ENCODE measurements at regions of chr3 and their contacts with region 1.

Region 1: GRCh38 chr3:184513276-184514170 is 48.1 kb upstream of the EPHB3 start:
- DNase-seq: peak; percentile 74
- H3K4me3 Mint-ChIP-seq: peak overlapping the region; percentile 53
- H3K27ac Mint-ChIP-seq: no peak overlapping the region
- H3K4me1 Mint-ChIP-seq: no peaks in the 10 kb centered on the region
- H3K27me3 Mint-ChIP-seq: peaks cover 69% of the 10 kb centered on the region
- CTCF ChIP-seq: peak; percentile 80

Region 2: GRCh38 chr3:184417619-184418327 is 95.8 kb before region 1 on chr3:
- CTCF ChIA-PET with region 1: interaction called, 69 read pairs
- POLR2A ChIA-PET with region 1: interaction called, 3 read pairs
- intact Hi-C with region 1: loop called (anchors 1 kb)
- DNase-seq: peak; percentile 72
- H3K4me3 Mint-ChIP-seq: no peak overlapping the region
- H3K27ac Mint-ChIP-seq: no peak overlapping the region
- H3K4me1 Mint-ChIP-seq: no peaks in the 10 kb centered on the region
- H3K27me3 Mint-ChIP-seq: peaks cover 2% of the 10 kb centered on the region
- CTCF ChIP-seq: peak; percentile 91

Region 3: DNA sequence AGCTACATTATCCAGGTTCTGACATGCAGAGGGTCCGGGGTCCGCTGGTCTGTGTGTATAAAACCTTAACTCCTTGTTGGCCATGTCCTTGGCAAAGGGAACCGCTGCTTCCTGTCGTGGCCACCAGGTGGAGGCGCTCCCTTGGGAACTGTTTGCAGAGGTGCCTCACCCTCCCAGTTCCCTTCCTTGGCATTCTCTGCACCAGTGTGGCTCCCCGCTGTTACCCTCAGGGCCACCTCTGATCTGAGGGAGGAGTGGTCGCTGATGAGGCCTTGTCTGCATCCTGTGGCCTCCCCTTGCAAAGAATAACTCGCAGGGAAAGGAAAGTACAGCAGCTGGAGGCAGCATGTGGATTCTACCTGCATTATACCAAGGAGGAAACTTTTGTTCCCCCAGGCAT is 44.1 kb before region 1 on chr3:
- CTCF ChIA-PET with region 1: interaction called, 107 read pairs
- POLR2A ChIA-PET with region 1: interaction called, 4 read pairs
- intact Hi-C with region 1: loop called (anchors 1 kb)
- DNase-seq: peak; percentile 68
- H3K4me3 Mint-ChIP-seq: no peak overlapping the region
- H3K27ac Mint-ChIP-seq: no peak overlapping the region
- H3K4me1 Mint-ChIP-seq: no peaks in the 10 kb centered on the region
- H3K27me3 Mint-ChIP-seq: peaks cover 44% of the 10 kb centered on the region
- CTCF ChIP-seq: peak; percentile 78

Region 4: DNA sequence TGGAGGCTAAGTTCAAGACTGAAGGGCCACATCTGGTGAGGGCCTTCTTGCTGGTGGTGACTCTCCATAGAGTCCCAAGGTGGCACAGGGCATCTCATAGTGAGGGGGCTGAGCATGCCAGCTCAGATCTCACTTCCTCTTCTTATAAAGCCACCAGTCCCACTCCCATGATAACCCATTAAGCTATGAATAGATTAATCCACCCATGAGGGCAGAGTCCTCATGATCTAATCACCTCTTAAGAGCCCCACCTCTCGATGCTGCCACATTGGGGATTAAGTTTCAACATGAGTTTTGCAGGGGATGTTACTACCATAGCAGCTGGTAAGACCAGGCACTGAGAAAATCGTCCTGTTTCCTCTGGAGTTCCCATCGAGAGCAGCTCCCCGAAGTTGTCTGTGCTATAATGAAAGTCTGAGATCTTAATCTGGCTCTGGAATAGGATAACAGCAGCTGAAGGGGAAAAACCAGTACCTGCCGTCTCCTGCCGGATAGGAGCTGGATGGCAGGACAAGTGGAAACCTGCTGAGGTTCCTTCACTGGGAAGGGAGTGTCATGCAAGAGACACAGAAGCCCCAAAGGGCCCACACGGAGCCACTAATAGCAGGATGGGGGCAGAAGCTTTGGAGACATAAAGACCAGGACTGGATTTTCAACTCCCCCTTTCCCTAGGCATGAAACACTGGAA is 31.4 kb before region 1 on chr3:
- CTCF ChIA-PET with region 1: interaction called, 46 read pairs
- POLR2A ChIA-PET with region 1: no interaction called
- intact Hi-C with region 1: no loop called
- DNase-seq: no peak
- H3K4me3 Mint-ChIP-seq: no peak overlapping the region
- H3K27ac Mint-ChIP-seq: no peak overlapping the region
- H3K4me1 Mint-ChIP-seq: no peaks in the 10 kb centered on the region
- H3K27me3 Mint-ChIP-seq: peaks cover 28% of the 10 kb centered on the region
- CTCF ChIP-seq: no peak

Region 5: GRCh38 chr3:184523825-184524615 is 10.5 kb after region 1 on chr3:
- CTCF ChIA-PET with region 1: interaction called, 16 read pairs
- POLR2A ChIA-PET with region 1: no interaction called
- intact Hi-C with region 1: no loop called
- DNase-seq: peak; percentile 69
- H3K4me3 Mint-ChIP-seq: no peak overlapping the region
- H3K27ac Mint-ChIP-seq: no peak overlapping the region
- H3K4me1 Mint-ChIP-seq: peaks cover 14% of the 10 kb centered on the region
- H3K27me3 Mint-ChIP-seq: peaks cover 13% of the 10 kb centered on the region
- CTCF ChIP-seq: no peak

Region 6: GRCh38 chr3:184538600-184539431 is 25.3 kb after region 1 on chr3:
- CTCF ChIA-PET with region 1: interaction called, 42 read pairs
- POLR2A ChIA-PET with region 1: interaction called, 3 read pairs
- intact Hi-C with region 1: no loop called
- DNase-seq: no peak
- H3K4me3 Mint-ChIP-seq: no peak overlapping the region
- H3K27ac Mint-ChIP-seq: no peak overlapping the region
- H3K4me1 Mint-ChIP-seq: no peaks in the 10 kb centered on the region
- H3K27me3 Mint-ChIP-seq: peaks cover 66% of the 10 kb centered on the region
- CTCF ChIP-seq: no peak